Endothelial cell of umbilical vein (primary cell): ENCODE measurements at regions of chr4 and their contacts with region 1.

Region 1: DNA sequence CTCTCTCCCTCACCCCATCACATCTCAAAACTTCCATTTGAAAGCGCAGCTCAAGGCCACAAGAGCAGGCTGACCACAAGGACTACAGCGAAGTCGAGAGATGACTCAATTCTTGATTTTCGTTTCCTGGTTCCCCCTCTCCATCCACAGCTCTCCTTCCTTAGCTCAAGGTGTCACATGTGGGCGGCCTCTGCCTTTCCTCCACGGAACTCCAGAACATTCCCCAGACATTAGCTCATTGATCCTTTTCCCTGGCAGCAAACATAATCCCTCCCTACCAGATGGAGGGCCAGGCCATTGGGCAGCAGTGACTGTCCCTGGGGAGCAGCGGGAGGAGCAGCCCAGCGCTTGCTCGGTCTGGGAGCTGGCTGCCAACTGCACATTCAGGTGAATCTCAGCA is 56.3 kb downstream of the CCDC149 start:
- DNase-seq: no peak
- H3K4me3 ChIP-seq: no peak overlapping the region
- H3K27ac ChIP-seq: no peak overlapping the region
- H3K4me1 ChIP-seq: peaks cover 23% of the 10 kb centered on the region
- H3K27me3 ChIP-seq: no peaks in the 10 kb centered on the region
- CTCF ChIP-seq: no peak
- POLR2A ChIP-seq: no peak

Region 2: GRCh38 chr4:24924309-24924781 is 67.8 kb after region 1 on chr4:
- CTCF ChIA-PET with region 1: no interaction called
- POLR2A ChIA-PET with region 1: no interaction called
- dilution Hi-C with region 1: no loop called
- intact Hi-C with region 1: no loop called
- DNase-seq: no peak
- H3K4me3 ChIP-seq: no peak overlapping the region
- H3K27ac ChIP-seq: no peak overlapping the region
- H3K4me1 ChIP-seq: no peaks in the 10 kb centered on the region
- H3K27me3 ChIP-seq: peaks cover 0 to 7% of the 10 kb centered on the region in 2 experiments
- CTCF ChIP-seq: no peak
- POLR2A ChIP-seq: no peak

Region 3: GRCh38 chr4:25358515-25359275 is 502.1 kb after region 1 on chr4:
- CTCF ChIA-PET with region 1: no interaction called
- POLR2A ChIA-PET with region 1: interaction called, 10 read pairs
- dilution Hi-C with region 1: no loop called
- intact Hi-C with region 1: no loop called
- DNase-seq: no peak
- H3K4me3 ChIP-seq: no peak overlapping the region
- H3K27ac ChIP-seq: no peak overlapping the region
- H3K4me1 ChIP-seq: no peaks in the 10 kb centered on the region
- H3K27me3 ChIP-seq: no peaks in the 10 kb centered on the region
- CTCF ChIP-seq: no peak
- POLR2A ChIP-seq: no peak